ENCODE measurements at regions of chr10 and their contacts with region 1.

Region 1: DNA sequence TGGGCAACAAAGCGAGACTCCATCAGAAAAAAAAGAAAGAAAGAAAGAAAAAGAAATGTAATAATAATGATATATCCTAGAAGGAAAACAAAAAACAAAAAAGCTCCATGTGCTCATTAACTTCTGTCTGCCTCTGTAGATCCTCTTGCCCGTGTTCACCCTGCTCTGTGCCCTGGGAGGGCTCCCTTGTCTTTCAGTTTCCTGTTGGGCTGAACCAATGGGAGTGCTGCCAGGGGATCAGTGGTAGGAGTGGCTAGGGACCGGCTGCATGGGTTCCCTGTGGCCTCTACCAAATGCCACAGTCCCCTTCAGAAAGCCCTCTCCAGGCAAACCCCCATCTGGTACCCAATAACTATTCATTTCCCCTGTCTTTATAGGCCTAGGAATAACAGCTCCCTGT is 51.8 kb upstream of the PARD3 start:
- DNase-seq: no peak
- H3K4me3 ChIP-seq: no peak overlapping the region
- H3K27ac ChIP-seq: no peak overlapping the region
- H3K4me1 ChIP-seq: no peaks in the 10 kb centered on the region
- H3K27me3 ChIP-seq: no peaks in the 10 kb centered on the region
- CTCF ChIP-seq: no peak

Region 2: DNA sequence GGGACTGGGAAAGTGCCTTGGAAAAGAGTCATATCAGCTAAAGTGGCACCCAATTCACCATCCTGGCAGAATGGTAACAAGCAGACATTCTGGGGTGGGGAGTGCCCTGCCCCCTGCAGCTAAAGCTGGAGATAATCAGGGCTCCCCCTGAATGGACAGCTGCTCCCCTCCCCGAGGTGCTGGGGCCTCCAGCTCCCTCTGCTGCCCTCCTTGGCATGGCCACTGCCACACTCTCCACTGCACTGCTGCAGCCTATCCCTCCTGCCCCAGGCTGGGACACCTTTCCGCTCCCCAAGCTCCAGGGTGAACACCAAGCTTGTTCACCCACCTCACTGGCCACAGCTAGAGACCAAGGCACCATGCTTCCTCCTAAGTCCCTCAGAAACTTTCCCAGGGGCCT is 42.0 kb before region 1 on chr10:
- CTCF ChIA-PET with region 1: no interaction called
- dilution Hi-C with region 1: loop called (anchors 5 kb)
- in situ Hi-C with region 1: no loop called
- intact Hi-C with region 1: no loop called
- DNase-seq: no peak
- H3K4me3 ChIP-seq: no peak overlapping the region
- H3K27ac ChIP-seq: no peak overlapping the region
- H3K4me1 ChIP-seq: peaks cover 5% of the 10 kb centered on the region
- H3K27me3 ChIP-seq: no peaks in the 10 kb centered on the region
- CTCF ChIP-seq: no peak

Region 3: GRCh38 chr10:34906067-34906965 is 39.5 kb after region 1 on chr10:
- CTCF ChIA-PET with region 1: no interaction called
- dilution Hi-C with region 1: no loop called
- in situ Hi-C with region 1: no loop called
- intact Hi-C with region 1: no loop called
- DNase-seq: peak; percentile 93
- H3K4me3 ChIP-seq: no peak overlapping the region
- H3K27ac ChIP-seq: peak overlapping the region; percentile 21
- H3K4me1 ChIP-seq: peaks cover 23% of the 10 kb centered on the region
- H3K27me3 ChIP-seq: no peaks in the 10 kb centered on the region
- CTCF ChIP-seq: no peak

Region 4: DNA sequence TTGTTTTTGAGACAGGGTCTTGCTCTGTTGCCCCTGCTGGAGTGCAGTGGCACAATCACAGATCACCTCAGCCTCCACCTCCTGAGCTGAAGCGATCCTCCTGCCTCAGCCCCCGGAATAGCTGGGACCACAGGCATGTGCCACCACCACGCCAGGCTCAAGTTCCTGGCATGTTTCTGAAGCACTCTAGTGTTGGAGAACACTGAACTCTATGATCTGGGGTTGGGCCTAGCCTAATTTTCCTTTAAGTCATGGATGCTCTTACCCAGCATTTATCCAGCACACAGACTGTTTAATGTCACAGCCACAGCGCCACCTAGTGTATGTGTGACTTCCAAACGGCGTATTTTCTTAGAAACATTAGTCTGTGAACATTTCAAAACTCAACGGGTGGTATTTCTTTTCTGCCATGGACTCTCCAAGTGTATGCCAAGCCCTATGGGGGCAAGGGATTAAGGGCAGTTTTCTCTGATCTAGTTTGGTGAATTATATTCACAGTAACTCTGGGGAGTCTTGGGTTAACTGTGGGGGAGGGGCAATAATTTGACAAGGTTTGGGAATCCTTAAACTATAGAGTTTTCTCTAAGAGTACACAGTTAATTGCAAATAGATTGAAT is 351.6 kb after region 1 on chr10:
- CTCF ChIA-PET with region 1: no interaction called
- dilution Hi-C with region 1: no loop called
- in situ Hi-C with region 1: no loop called
- intact Hi-C with region 1: no loop called
- DNase-seq: peak; percentile 65
- H3K4me3 ChIP-seq: no peak overlapping the region
- H3K27ac ChIP-seq: no peak overlapping the region
- H3K4me1 ChIP-seq: no peaks in the 10 kb centered on the region
- H3K27me3 ChIP-seq: no peaks in the 10 kb centered on the region
- CTCF ChIP-seq: peak; percentile 74 to 77

Measured in mammary epithelial cell (primary cell).